ENCODE measurements at regions of chr1 and their contacts with region 1.

Region 1: GRCh38 chr1:156892190-156893047 is 1.1 kb upstream of the PEAR1 start:
- DNase-seq: peak; percentile 46 to 97 (median 82)

Region 2: GRCh38 chr1:156797212-156797871 is 95.1 kb before region 1 on chr1:
- intact Hi-C with region 1: loop called (anchors 5 kb)
- DNase-seq: peak in 4 of 10 donors; percentile 33 to 46 (median 36)

Region 3: GRCh38 chr1:156838981-156839410 is 53.4 kb before region 1 on chr1:
- intact Hi-C with region 1: loop called (anchors 10 kb)
- DNase-seq: peak in 2 of 10 donors; percentile 31 to 50

Region 4: GRCh38 chr1:156920233-156921052 is 28.0 kb after region 1 on chr1 and contains the start of gene LRRC71:
- intact Hi-C with region 1: loop called (anchors 2 kb)
- DNase-seq: peak in 7 of 10 donors; percentile 38 to 92 (median 55)

Measured in posterior cingulate gyrus (tissue), 11 donors.